ENCODE measurements at regions of chr2 and their contacts with region 1.

Region 1: GRCh38 chr2:168380500-168380899 is 75.6 kb upstream of the CERS6 start:
- DNase-seq: no peak
- ATAC-seq: no peak
- H3K4me3 ChIP-seq: no peak overlapping the region
- H3K27ac ChIP-seq: no peak overlapping the region
- H3K4me1 ChIP-seq: no peaks in the 10 kb centered on the region
- H3K27me3 ChIP-seq: no peaks in the 10 kb centered on the region
- CTCF ChIP-seq: no peak
- POLR2A ChIP-seq: no peak

Region 2: GRCh38 chr2:167964650-167965413 is 415.7 kb before region 1 on chr2:
- intact Hi-C with region 1: no loop called
- DNase-seq: no peak
- ATAC-seq: peak in 2 of 4 donors; percentile 15 to 67
- H3K4me3 ChIP-seq: no peak overlapping the region
- H3K27ac ChIP-seq: no peak overlapping the region
- H3K4me1 ChIP-seq: peaks cover 0 to 4% (median 0%) of the 10 kb centered on the region in 12 donors
- H3K27me3 ChIP-seq: no peaks in the 10 kb centered on the region
- CTCF ChIP-seq: peak in 8 of 12 donors; percentile 9 to 47 (median 29)
- POLR2A ChIP-seq: no peak

Region 3: GRCh38 chr2:168416555-168416954 is 36.1 kb after region 1 on chr2:
- intact Hi-C with region 1: no loop called
- DNase-seq: no peak
- ATAC-seq: no peak
- H3K4me3 ChIP-seq: no peak overlapping the region
- H3K27ac ChIP-seq: no peak overlapping the region
- H3K4me1 ChIP-seq: no peaks in the 10 kb centered on the region
- H3K27me3 ChIP-seq: no peaks in the 10 kb centered on the region
- CTCF ChIP-seq: no peak
- POLR2A ChIP-seq: no peak

Region 4: DNA sequence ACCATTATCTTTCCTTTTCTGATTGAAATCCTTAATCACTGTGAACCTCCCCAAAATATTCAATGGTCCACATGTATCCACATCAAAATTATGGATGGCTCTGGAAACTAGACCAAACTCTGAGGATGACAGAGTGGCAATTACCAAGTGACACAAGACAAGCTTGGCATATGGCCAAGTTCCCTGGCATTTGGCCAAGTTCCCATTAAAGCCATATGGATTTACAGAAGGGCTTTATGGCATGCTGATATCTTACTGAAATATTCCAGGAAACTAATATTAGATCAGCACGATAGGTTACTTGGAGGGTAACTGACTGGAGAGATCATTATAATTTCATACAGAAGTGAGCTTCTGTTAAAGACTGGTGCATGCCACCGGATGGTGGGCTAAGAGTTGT is 53.6 kb after region 1 on chr2:
- intact Hi-C with region 1: loop called in 1 of 10 experiments (anchors 5 kb)
- DNase-seq: peak in 2 of 5 donors; percentile 17 to 23
- ATAC-seq: no peak
- H3K4me3 ChIP-seq: no peak overlapping the region
- H3K27ac ChIP-seq: no peak overlapping the region
- H3K4me1 ChIP-seq: peaks cover 0 to 16% (median 0%) of the 10 kb centered on the region in 12 donors
- H3K27me3 ChIP-seq: no peaks in the 10 kb centered on the region
- CTCF ChIP-seq: no peak
- POLR2A ChIP-seq: no peak

Region 5: GRCh38 chr2:168490015-168490874 is 109.7 kb after region 1 on chr2:
- intact Hi-C with region 1: no loop called
- DNase-seq: no peak
- ATAC-seq: peak; percentile 57 to 75 (median 70)
- H3K4me3 ChIP-seq: peak overlapping the region in 2 of 12 donors; percentile 10 to 36
- H3K27ac ChIP-seq: peak overlapping the region in 11 of 12 donors; percentile 5 to 81 (median 23)
- H3K4me1 ChIP-seq: peaks cover 0 to 28% (median 15%) of the 10 kb centered on the region in 12 donors
- H3K27me3 ChIP-seq: no peaks in the 10 kb centered on the region
- CTCF ChIP-seq: no peak
- POLR2A ChIP-seq: no peak

Region 6: GRCh38 chr2:168626096-168626495 is 245.6 kb after region 1 on chr2:
- intact Hi-C with region 1: no loop called
- DNase-seq: no peak
- ATAC-seq: no peak
- H3K4me3 ChIP-seq: no peak overlapping the region
- H3K27ac ChIP-seq: peak overlapping the region in 2 of 12 donors; percentile 14 to 33
- H3K4me1 ChIP-seq: peaks cover 0 to 8% (median 0%) of the 10 kb centered on the region in 12 donors
- H3K27me3 ChIP-seq: no peaks in the 10 kb centered on the region
- CTCF ChIP-seq: no peak
- POLR2A ChIP-seq: no peak